CD8-positive, alpha-beta T cell (primary cell): ENCODE measurements at regions of chr4 and their contacts with region 1.

Region 1: GRCh38 chr4:122151982-122152710 is at the start of gene BLTP1:
- DNase-seq: peak; percentile 71 to 94 (median 87)
- ATAC-seq: peak; percentile 92
- H3K4me3 ChIP-seq: peak within 1 kb of the TSS; percentile 93 to 96
- H3K4me3 Mint-ChIP-seq: peak within 1 kb of the TSS; percentile 96
- H3K27ac ChIP-seq: peak within 1 kb of the TSS; percentile 85 to 94
- H3K27ac Mint-ChIP-seq: peak within 1 kb of the TSS; percentile 97
- H3K4me1 ChIP-seq: peaks cover 36% of the 10 kb centered on the region
- H3K4me1 Mint-ChIP-seq: peaks cover 66% of the 10 kb centered on the region
- H3K27me3 ChIP-seq: no peaks in the 10 kb centered on the region
- H3K27me3 Mint-ChIP-seq: no peaks in the 10 kb centered on the region
- CTCF ChIP-seq: no peak
- total RNA-seq, gene BLTP1: 75.4 to 80.5 TPM

Region 2: DNA sequence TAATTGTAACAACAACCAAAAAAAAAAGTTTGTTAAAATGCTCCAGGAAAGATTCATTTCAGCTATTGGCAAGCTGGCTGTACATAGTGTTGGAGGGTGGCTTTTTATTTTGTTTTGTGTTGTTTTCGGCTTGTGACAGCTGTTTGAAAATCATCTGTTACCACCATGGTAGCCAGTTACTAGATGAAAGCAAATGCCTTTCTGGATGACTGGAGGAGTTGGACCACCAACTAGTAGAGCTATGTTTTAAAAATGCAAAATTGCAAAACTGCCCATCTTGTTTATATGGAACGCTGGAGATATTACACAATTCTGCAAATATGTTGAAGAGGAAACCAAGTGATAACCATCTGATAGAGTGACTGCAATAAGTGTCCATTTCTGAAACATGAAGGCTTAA is 934.8 kb before region 1 on chr4:
- CTCF ChIA-PET with region 1: no interaction called
- POLR2A ChIA-PET with region 1: no interaction called
- intact Hi-C with region 1: loop called in 1 of 2 experiments (anchors 10 kb)
- DNase-seq: no peak
- ATAC-seq: no peak
- H3K4me3 ChIP-seq: no peak overlapping the region
- H3K4me3 Mint-ChIP-seq: no peak overlapping the region
- H3K27ac ChIP-seq: peak overlapping the region in 1 of 2 experiments; percentile 67
- H3K27ac Mint-ChIP-seq: peak overlapping the region; percentile 47
- H3K4me1 ChIP-seq: peaks cover 8% of the 10 kb centered on the region
- H3K4me1 Mint-ChIP-seq: peaks cover 31% of the 10 kb centered on the region
- H3K27me3 ChIP-seq: no peaks in the 10 kb centered on the region
- H3K27me3 Mint-ChIP-seq: no peaks in the 10 kb centered on the region
- CTCF ChIP-seq: no peak

Region 3: GRCh38 chr4:121823505-121824170 is 328.5 kb before region 1 on chr4 and contains the start of gene CCNA2:
- CTCF ChIA-PET with region 1: no interaction called
- POLR2A ChIA-PET with region 1: no interaction called
- intact Hi-C with region 1: loop called (anchors 2 to 5 kb)
- DNase-seq: peak; percentile 90 to 97 (median 95)
- ATAC-seq: peak; percentile 98
- H3K4me3 ChIP-seq: peak within 1 kb of the TSS; percentile 62 to 74
- H3K4me3 Mint-ChIP-seq: peak within 1 kb of the TSS; percentile 91
- H3K27ac ChIP-seq: peak within 1 kb of the TSS; percentile 64 to 77
- H3K27ac Mint-ChIP-seq: peak within 1 kb of the TSS; percentile 86
- H3K4me1 ChIP-seq: peaks cover 8% of the 10 kb centered on the region
- H3K4me1 Mint-ChIP-seq: peaks cover 13% of the 10 kb centered on the region
- H3K27me3 ChIP-seq: no peaks in the 10 kb centered on the region
- H3K27me3 Mint-ChIP-seq: no peaks in the 10 kb centered on the region
- CTCF ChIP-seq: no peak
- total RNA-seq, gene CCNA2: 0.22 to 0.43 TPM

Region 4: GRCh38 chr4:121900132-121900983 is 251.8 kb before region 1 on chr4:
- CTCF ChIA-PET with region 1: interaction called, 3 read pairs
- POLR2A ChIA-PET with region 1: no interaction called
- intact Hi-C with region 1: loop called in 1 of 2 experiments (anchors 1 kb)
- DNase-seq: peak in 8 of 9 experiments; percentile 9 to 77 (median 50)
- ATAC-seq: peak; percentile 80
- H3K4me3 ChIP-seq: no peak overlapping the region
- H3K4me3 Mint-ChIP-seq: no peak overlapping the region
- H3K27ac ChIP-seq: no peak overlapping the region
- H3K27ac Mint-ChIP-seq: no peak overlapping the region
- H3K4me1 ChIP-seq: peaks cover 4% of the 10 kb centered on the region
- H3K4me1 Mint-ChIP-seq: peaks cover 10% of the 10 kb centered on the region
- H3K27me3 ChIP-seq: no peaks in the 10 kb centered on the region
- H3K27me3 Mint-ChIP-seq: peaks cover 10% of the 10 kb centered on the region
- CTCF ChIP-seq: peak; percentile 72

Region 5: GRCh38 chr4:122131562-122132157 is 20.5 kb before region 1 on chr4:
- CTCF ChIA-PET with region 1: interaction called, 3 read pairs
- POLR2A ChIA-PET with region 1: interaction called, 4 read pairs
- intact Hi-C with region 1: loop called in 1 of 2 experiments (anchors 2 kb)
- DNase-seq: peak in 2 of 9 experiments; percentile 31 to 58
- ATAC-seq: peak; percentile 68
- H3K4me3 ChIP-seq: no peak overlapping the region
- H3K4me3 Mint-ChIP-seq: peak overlapping the region; percentile 51
- H3K27ac ChIP-seq: peak overlapping the region in 1 of 2 experiments; percentile 55
- H3K27ac Mint-ChIP-seq: peak overlapping the region; percentile 88
- H3K4me1 ChIP-seq: peaks cover 13% of the 10 kb centered on the region
- H3K4me1 Mint-ChIP-seq: peaks cover 14% of the 10 kb centered on the region
- H3K27me3 ChIP-seq: no peaks in the 10 kb centered on the region
- H3K27me3 Mint-ChIP-seq: peaks cover 2% of the 10 kb centered on the region
- CTCF ChIP-seq: no peak

Region 6: DNA sequence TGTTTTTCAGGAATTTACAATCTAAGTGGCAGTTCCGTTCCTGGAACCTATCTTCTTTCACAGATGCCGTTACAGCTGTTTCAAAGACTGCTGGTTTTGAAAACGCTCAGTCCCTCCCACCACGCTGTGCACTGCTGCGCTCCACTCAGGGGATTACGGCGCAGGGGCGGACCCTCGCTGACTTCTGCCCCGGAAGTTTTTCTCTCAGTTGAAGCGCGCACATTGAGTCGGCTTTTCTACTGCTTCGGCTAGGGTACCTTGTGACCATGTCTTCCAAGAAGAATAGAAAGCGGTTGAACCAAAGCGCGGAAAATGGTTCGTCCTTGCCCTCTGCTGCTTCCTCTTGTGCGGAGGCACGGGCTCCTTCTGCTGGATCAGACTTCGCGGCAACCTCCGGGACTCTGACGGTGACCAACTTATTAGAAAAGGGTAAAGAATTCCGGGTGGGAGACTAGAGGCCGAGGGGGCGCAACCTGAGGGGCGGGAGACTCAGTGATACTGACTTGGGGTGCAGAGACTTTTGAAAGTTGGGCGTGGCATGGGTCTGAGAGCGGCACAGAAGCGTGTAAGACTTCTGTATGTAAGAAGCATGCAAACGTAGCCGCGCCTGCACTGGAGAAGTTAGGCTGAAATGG is 770.8 kb after region 1 on chr4:
- CTCF ChIA-PET with region 1: no interaction called
- POLR2A ChIA-PET with region 1: no interaction called
- intact Hi-C with region 1: loop called (anchors 5 kb)
- DNase-seq: peak; percentile 72 to 92 (median 89)
- ATAC-seq: peak; percentile 98
- H3K4me3 ChIP-seq: peak overlapping the region; percentile 79 to 87
- H3K4me3 Mint-ChIP-seq: peak overlapping the region; percentile 99
- H3K27ac ChIP-seq: peak overlapping the region; percentile 62 to 74
- H3K27ac Mint-ChIP-seq: peak overlapping the region; percentile 96
- H3K4me1 ChIP-seq: peaks cover 20% of the 10 kb centered on the region
- H3K4me1 Mint-ChIP-seq: peaks cover 17% of the 10 kb centered on the region
- H3K27me3 ChIP-seq: no peaks in the 10 kb centered on the region
- H3K27me3 Mint-ChIP-seq: no peaks in the 10 kb centered on the region
- CTCF ChIP-seq: no peak